ENCODE measurements at regions of chr1 and their contacts with region 1.

Region 1: GRCh38 chr1:154809436-154810413 is 60.4 kb downstream of the KCNN3 start:
- DNase-seq: no peak
- ATAC-seq: no peak

Region 2: GRCh38 chr1:154867064-154867825 is 57.5 kb after region 1 on chr1:
- intact Hi-C with region 1: loop called (anchors 5 kb)
- DNase-seq: no peak
- ATAC-seq: no peak

Region 3: DNA sequence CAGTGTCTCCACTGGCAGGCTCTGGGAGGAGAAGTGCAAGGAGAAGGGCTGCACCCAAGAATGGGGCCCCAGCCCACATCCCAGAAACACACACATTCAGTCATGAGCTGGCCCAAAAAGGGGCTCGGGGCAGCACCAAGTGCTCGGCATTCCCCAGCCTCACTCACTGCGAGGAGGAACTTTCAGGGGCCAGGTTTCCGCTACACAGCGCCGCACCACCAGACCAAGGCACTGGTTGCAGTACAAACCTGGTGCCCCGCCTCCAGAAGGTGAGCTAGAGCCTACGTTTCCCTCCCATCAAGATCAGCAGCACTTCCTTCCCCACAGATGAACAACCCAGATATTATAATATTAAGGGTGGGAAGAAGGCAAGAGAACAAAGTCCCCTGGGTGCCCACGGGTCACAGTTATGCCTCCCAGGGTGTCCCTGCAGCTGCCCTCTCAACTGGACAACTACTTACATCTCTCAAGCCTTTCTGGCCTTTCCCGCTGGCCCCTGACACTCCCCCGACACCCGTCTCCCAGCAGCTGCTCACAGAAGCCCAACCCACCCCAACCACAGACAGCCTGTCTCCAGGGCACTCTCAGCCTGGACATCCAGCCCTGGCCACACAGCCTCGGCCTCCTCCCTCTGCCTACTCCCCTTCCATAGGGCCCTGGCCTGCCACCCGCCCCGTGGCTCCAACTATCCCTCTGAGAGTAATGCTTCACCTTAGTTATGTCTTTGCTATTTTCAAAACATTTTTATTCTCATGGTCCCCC is 142.4 kb after region 1 on chr1:
- intact Hi-C with region 1: no loop called
- DNase-seq: peak; percentile 66
- ATAC-seq: no peak

Measured in Right ventricle myocardium inferior (tissue), 1 donor.